Natural killer cell (primary cell): ENCODE measurements at regions of chr17 and their contacts with region 1.

Region 1: GRCh38 chr17:30716461-30717300 is 107.8 kb downstream of the CRLF3 start:
- DNase-seq: no peak
- ATAC-seq: no peak
- H3K4me3 ChIP-seq: no peak overlapping the region
- H3K4me3 Mint-ChIP-seq: no peak overlapping the region
- H3K27ac ChIP-seq: no peak overlapping the region
- H3K27ac Mint-ChIP-seq: no peak overlapping the region
- H3K4me1 ChIP-seq: peaks cover 12% of the 10 kb centered on the region
- H3K4me1 Mint-ChIP-seq: peaks cover 25 to 34% of the 10 kb centered on the region in 2 donors
- H3K27me3 ChIP-seq: no peaks in the 10 kb centered on the region
- H3K27me3 Mint-ChIP-seq: no peaks in the 10 kb centered on the region
- CTCF ChIP-seq: no peak

Region 2: GRCh38 chr17:30477083-30477773 is 239.5 kb before region 1 on chr17 and contains the start of gene GOSR1:
- intact Hi-C with region 1: loop called (anchors 5 kb)
- DNase-seq: peak; percentile 86 to 98
- ATAC-seq: peak; percentile 96 to 99 (median 98)
- H3K4me3 ChIP-seq: peak within 1 kb of the TSS; percentile 78
- H3K4me3 Mint-ChIP-seq: peak within 1 kb of the TSS; percentile 99
- H3K27ac ChIP-seq: peak within 1 kb of the TSS; percentile 85
- H3K27ac Mint-ChIP-seq: peak within 1 kb of the TSS; percentile 99
- H3K4me1 ChIP-seq: peaks cover 12% of the 10 kb centered on the region
- H3K4me1 Mint-ChIP-seq: peaks cover 21 to 28% of the 10 kb centered on the region in 2 donors
- H3K27me3 ChIP-seq: peaks cover 3% of the 10 kb centered on the region
- H3K27me3 Mint-ChIP-seq: no peaks in the 10 kb centered on the region
- CTCF ChIP-seq: peak; percentile 71
- total RNA-seq, gene GOSR1: 45.0 to 57.5 (median 54.4) TPM

Region 3: DNA sequence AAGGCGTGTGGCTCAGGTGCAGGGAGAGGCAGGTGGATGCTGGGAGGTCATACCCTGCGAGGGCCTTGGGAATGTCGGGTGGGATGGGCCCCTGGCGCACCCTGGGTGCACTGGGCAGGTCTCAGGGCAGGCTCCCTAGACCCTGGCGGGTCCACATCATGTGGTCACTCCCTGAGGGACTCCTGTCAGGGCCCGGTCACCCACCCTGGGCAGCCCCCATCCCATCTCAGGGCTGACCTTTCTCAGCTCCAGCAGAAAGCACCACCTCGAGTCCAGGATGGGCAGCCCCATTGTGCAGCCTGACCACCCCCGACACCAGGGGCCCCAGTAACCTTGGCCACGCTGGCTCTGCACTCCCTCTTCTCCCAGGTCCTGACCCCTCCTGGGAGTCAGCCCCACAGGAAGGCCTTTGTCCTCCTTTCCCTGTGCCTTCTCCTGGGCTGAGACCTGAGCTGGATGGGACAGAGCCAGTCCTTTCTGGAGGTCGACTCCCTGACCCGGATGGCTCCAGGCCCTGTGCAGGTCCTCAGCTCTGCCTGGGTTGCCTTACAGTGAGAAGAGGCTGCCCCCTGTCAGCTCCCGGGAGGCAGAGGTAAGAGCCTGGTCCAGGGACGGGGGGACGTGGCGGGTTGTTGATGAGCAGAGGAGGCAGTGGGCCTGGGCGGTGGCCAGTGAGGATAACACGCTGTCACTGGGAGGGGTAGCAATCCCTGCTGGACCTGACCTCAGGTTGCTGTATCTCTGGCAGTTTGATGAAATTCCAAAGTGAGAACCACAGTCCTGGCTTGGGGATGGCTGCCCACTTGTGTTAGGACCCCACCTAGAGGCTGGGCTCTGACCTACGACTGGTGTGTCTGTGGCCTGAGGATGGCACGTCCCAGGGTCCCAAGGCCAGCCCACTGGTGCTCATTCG is 161.6 kb before region 1 on chr17:
- intact Hi-C with region 1: no loop called
- DNase-seq: no peak
- ATAC-seq: no peak
- H3K4me3 ChIP-seq: no peak overlapping the region
- H3K4me3 Mint-ChIP-seq: no peak overlapping the region
- H3K27ac ChIP-seq: no peak overlapping the region
- H3K27ac Mint-ChIP-seq: no peak overlapping the region
- H3K4me1 ChIP-seq: peaks cover 21% of the 10 kb centered on the region
- H3K4me1 Mint-ChIP-seq: peaks cover 0 to 12% of the 10 kb centered on the region in 2 donors
- H3K27me3 ChIP-seq: no peaks in the 10 kb centered on the region
- H3K27me3 Mint-ChIP-seq: no peaks in the 10 kb centered on the region
- CTCF ChIP-seq: no peak

Region 4: GRCh38 chr17:30600049-30600829 is 116.4 kb before region 1 on chr17:
- intact Hi-C with region 1: loop called (anchors 10 kb)
- DNase-seq: peak; percentile 64 to 66
- ATAC-seq: peak; percentile 87 to 94 (median 89)
- H3K4me3 ChIP-seq: peak overlapping the region; percentile 85
- H3K4me3 Mint-ChIP-seq: peak overlapping the region; percentile 96
- H3K27ac ChIP-seq: peak overlapping the region; percentile 86
- H3K27ac Mint-ChIP-seq: peak overlapping the region; percentile 76 to 91
- H3K4me1 ChIP-seq: peaks cover 12% of the 10 kb centered on the region
- H3K4me1 Mint-ChIP-seq: peaks cover 29 to 32% of the 10 kb centered on the region in 2 donors
- H3K27me3 ChIP-seq: no peaks in the 10 kb centered on the region
- H3K27me3 Mint-ChIP-seq: no peaks in the 10 kb centered on the region
- CTCF ChIP-seq: peak; percentile 41